CD4-positive, alpha-beta memory T cell (primary cell): ENCODE measurements at regions of chr7 and their contacts with region 1.

Region 1: DNA sequence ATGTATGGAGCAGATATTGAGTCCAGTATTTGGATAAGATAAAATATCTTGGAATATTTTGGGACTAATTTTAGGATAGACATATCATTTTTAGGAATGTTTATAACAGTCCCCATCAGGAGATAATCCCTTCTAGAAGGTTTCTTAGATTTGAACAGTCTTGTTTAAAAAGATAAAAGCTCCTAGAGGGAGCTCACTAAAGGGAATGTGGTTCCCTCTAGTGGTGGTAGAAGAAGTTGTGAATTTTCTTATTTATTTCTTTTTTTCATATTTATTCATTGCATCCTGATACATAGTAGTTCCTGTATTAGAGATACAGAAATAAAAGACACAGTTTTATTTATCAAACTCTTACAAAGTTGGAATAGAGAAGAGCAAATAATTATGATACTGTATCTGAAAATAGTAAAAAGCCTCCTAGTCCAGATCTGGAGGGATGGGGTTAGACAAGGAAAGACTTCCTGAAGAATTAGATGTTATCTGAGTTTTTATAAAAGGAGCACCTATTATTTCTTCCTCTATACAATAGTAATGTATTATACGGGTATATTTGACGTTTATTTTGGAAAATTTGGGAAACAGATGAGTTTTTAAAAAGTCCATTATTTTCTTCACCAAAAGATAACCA is 24.5 kb upstream of the KLF14 start:
- DNase-seq: peak in 4 of 5 donors; percentile 27 to 45 (median 38)
- H3K4me3 ChIP-seq: no peak overlapping the region
- H3K4me3 Mint-ChIP-seq: no peak overlapping the region
- H3K27ac ChIP-seq: no peak overlapping the region
- H3K27ac Mint-ChIP-seq: no peak overlapping the region
- H3K4me1 ChIP-seq: no peaks in the 10 kb centered on the region
- H3K4me1 Mint-ChIP-seq: no peaks in the 10 kb centered on the region
- H3K27me3 ChIP-seq: no peaks in the 10 kb centered on the region
- H3K27me3 Mint-ChIP-seq: peaks cover 0 to 5% of the 10 kb centered on the region in 2 donors

Region 2: DNA sequence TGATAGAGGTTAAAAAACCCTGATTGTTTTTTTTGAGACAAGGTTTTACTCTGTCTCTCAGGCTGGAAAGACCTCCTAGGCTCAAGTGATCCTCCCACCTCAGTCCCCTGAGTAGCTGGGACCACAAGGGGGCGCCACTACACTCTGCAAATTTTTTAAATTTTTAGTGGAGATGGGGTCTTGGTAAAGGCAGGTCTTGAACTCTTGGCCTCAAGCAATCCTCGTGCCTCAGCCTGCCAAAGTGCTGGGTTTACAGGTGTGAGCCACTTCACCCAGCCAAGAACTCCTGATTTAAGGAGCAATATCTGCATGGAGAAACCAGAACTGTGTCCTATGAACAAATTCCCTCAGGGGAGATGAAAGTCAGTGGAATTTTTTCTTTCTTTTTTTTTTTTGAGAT is 695.5 kb before region 1 on chr7:
- CTCF ChIA-PET with region 1: interaction called, 5 read pairs
- POLR2A ChIA-PET with region 1: no interaction called
- intact Hi-C with region 1: loop called (anchors 2 kb)
- DNase-seq: peak; percentile 46 to 58 (median 53)
- H3K4me3 ChIP-seq: no peak overlapping the region
- H3K4me3 Mint-ChIP-seq: no peak overlapping the region
- H3K27ac ChIP-seq: no peak overlapping the region
- H3K27ac Mint-ChIP-seq: no peak overlapping the region
- H3K4me1 ChIP-seq: no peaks in the 10 kb centered on the region
- H3K4me1 Mint-ChIP-seq: no peaks in the 10 kb centered on the region
- H3K27me3 ChIP-seq: no peaks in the 10 kb centered on the region
- H3K27me3 Mint-ChIP-seq: peaks cover 5 to 9% of the 10 kb centered on the region in 2 donors

Region 3: GRCh38 chr7:130205084-130205947 is 553.2 kb before region 1 on chr7 and contains the start of gene TMEM209:
- CTCF ChIA-PET with region 1: interaction called, 9 read pairs
- POLR2A ChIA-PET with region 1: no interaction called
- intact Hi-C with region 1: loop called (anchors 1 kb)
- DNase-seq: peak; percentile 94 to 95 (median 94)
- H3K4me3 ChIP-seq: peak within 1 kb of the TSS; percentile 82 to 91
- H3K4me3 Mint-ChIP-seq: peak within 1 kb of the TSS; percentile 98 to 100 (median 100)
- H3K27ac ChIP-seq: peak within 1 kb of the TSS; percentile 90
- H3K27ac Mint-ChIP-seq: peak within 1 kb of the TSS; percentile 93 to 100 (median 99)
- H3K4me1 ChIP-seq: peaks cover 14% of the 10 kb centered on the region
- H3K4me1 Mint-ChIP-seq: peaks cover 17 to 39% (median 27%) of the 10 kb centered on the region in 4 donors
- H3K27me3 ChIP-seq: no peaks in the 10 kb centered on the region
- H3K27me3 Mint-ChIP-seq: no peaks in the 10 kb centered on the region
- total RNA-seq, gene TMEM209: 34.5 to 38.0 TPM

Region 4: GRCh38 chr7:130242198-130243014 is 516.1 kb before region 1 on chr7:
- CTCF ChIA-PET with region 1: interaction called, 35 read pairs
- POLR2A ChIA-PET with region 1: no interaction called
- intact Hi-C with region 1: loop called (anchors 1 kb)
- DNase-seq: peak in 4 of 5 donors; percentile 18 to 31 (median 26)
- H3K4me3 ChIP-seq: no peak overlapping the region
- H3K4me3 Mint-ChIP-seq: no peak overlapping the region
- H3K27ac ChIP-seq: no peak overlapping the region
- H3K27ac Mint-ChIP-seq: no peak overlapping the region
- H3K4me1 ChIP-seq: peaks cover 3% of the 10 kb centered on the region
- H3K4me1 Mint-ChIP-seq: peaks cover 0 to 9% (median 3%) of the 10 kb centered on the region in 4 donors
- H3K27me3 ChIP-seq: peaks cover 5% of the 10 kb centered on the region
- H3K27me3 Mint-ChIP-seq: peaks cover 4 to 14% of the 10 kb centered on the region in 2 donors

Region 5: GRCh38 chr7:130486114-130486958 is 272.2 kb before region 1 on chr7:
- CTCF ChIA-PET with region 1: interaction called, 6 read pairs
- POLR2A ChIA-PET with region 1: no interaction called
- intact Hi-C with region 1: loop called (anchors 1 kb)
- DNase-seq: peak; percentile 47 to 61 (median 55)
- H3K4me3 ChIP-seq: peak overlapping the region; percentile 24 to 66
- H3K4me3 Mint-ChIP-seq: peak overlapping the region; percentile 84 to 89 (median 87)
- H3K27ac ChIP-seq: no peak overlapping the region
- H3K27ac Mint-ChIP-seq: peak overlapping the region in 2 of 7 donors; percentile 25 to 85
- H3K4me1 ChIP-seq: peaks cover 15% of the 10 kb centered on the region
- H3K4me1 Mint-ChIP-seq: peaks cover 17 to 26% (median 17%) of the 10 kb centered on the region in 4 donors
- H3K27me3 ChIP-seq: peaks cover 8% of the 10 kb centered on the region
- H3K27me3 Mint-ChIP-seq: peaks cover 30 to 41% of the 10 kb centered on the region in 2 donors